ENCODE measurements at regions of chr14 and their contacts with region 1.

Region 1: GRCh38 chr14:59126710-59127432 is 61.6 kb upstream of the DAAM1 start:
- DNase-seq: peak in 1 of 2 donors; percentile 80
- H3K4me3 ChIP-seq: no peak overlapping the region
- H3K27ac ChIP-seq: no peak overlapping the region
- H3K4me1 ChIP-seq: no peaks in the 10 kb centered on the region
- H3K27me3 ChIP-seq: no peaks in the 10 kb centered on the region
- CTCF ChIP-seq: peak in 5 of 7 experiments; percentile 43 to 84 (median 67)
- EP300 ChIP-seq: no peak
- POLR2A ChIP-seq: no peak

Region 2: DNA sequence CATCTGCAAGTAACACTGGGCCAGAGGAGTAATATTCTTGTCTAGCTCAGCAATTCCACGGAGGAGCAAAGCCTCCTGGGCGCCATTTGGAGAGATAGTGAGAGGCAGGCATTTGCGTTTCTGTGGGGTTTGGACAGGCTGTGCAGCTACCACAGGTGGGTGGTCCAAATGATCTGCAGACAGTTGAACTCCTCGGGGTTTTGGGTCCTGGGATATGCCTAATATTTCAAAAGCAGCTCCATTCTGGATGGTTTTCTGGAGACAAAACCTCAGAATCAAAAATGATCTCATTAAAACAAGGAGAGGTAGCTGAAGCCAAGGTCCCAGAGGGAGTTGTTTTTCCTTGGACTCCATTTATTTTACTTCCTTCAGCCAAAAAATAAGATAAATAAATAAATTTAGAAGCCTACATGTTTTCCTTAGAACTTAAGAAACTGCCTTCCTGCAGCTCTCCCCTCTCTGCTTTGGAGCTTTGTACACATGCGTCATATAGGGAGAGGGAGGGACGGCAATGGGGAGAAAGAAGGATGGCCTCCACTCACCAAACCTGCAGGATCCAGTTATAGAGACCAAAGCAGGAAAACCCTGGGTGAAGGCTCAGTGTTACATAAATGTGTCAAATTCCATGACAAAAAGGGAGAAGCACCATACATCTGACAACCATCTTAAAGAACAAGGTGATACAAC is 165.7 kb before region 1 on chr14:
- intact Hi-C with region 1: no loop called
- DNase-seq: peak in 1 of 2 donors; percentile 36
- H3K4me3 ChIP-seq: no peak overlapping the region
- H3K27ac ChIP-seq: no peak overlapping the region
- H3K4me1 ChIP-seq: no peaks in the 10 kb centered on the region
- H3K27me3 ChIP-seq: no peaks in the 10 kb centered on the region
- CTCF ChIP-seq: no peak
- EP300 ChIP-seq: no peak
- POLR2A ChIP-seq: no peak

Region 3: GRCh38 chr14:59438195-59438647 is 311.4 kb after region 1 on chr14:
- intact Hi-C with region 1: loop called (anchors 5 kb)
- DNase-seq: no peak
- H3K4me3 ChIP-seq: no peak overlapping the region
- H3K27ac ChIP-seq: no peak overlapping the region
- H3K4me1 ChIP-seq: no peaks in the 10 kb centered on the region
- H3K27me3 ChIP-seq: no peaks in the 10 kb centered on the region
- CTCF ChIP-seq: no peak
- EP300 ChIP-seq: no peak
- POLR2A ChIP-seq: no peak

Region 4: DNA sequence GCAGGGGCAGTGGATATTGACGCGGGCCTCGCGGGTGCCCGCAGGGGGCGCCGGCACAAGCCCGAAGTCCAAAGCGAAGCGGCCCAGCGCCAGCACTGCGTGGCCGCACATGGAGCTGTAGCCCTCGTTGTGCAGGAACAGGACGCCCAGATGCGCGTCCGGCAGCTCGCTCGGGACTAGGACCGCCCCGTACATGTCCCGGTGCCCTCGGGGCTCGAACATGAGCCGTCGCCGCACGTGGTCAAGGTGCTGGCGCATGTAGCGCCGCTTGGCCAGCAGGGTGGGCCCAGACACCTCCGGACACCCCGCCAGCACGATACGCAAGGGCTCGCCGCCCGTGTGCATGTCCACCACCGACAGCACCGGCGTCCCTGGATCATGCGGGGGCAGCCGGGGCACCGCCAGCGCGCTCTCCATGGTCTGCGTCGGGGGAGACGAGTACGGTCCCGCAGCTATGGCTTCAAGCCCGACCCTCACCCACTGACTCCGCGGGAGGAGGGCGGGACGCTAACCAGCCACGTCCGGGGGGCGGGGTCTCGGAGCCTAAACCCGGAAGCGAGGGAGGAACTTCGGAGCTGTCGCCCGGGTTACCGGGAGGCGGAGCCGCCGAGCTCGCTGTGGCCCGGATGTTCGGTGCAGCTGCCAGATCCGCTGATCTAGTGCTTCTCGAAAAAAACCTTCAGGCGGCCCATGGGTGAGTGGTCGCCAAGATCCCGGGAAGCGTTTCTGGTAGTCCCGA is 357.2 kb after region 1 on chr14 and contains the starts of genes JKAMP and L3HYPDH:
- intact Hi-C with region 1: no loop called
- DNase-seq: peak; percentile 97 to 99
- H3K4me3 ChIP-seq: peak within 1 kb of the TSS; percentile 75 to 88 (median 85)
- H3K27ac ChIP-seq: peak within 1 kb of the TSS; percentile 91 to 96 (median 94)
- H3K4me1 ChIP-seq: peaks cover 42 to 75% (median 56%) of the 10 kb centered on the region in 4 donors
- H3K27me3 ChIP-seq: no peaks in the 10 kb centered on the region
- CTCF ChIP-seq: peak in 5 of 7 experiments; percentile 46 to 64 (median 58)
- EP300 ChIP-seq: no peak
- POLR2A ChIP-seq: peak in 2 of 4 donors; percentile 28 to 80
- total RNA-seq, gene JKAMP: 26.3 to 120 (median 95.1) TPM
- total RNA-seq, gene L3HYPDH: 4.9 to 40.2 (median 30.1) TPM

Measured in stomach (tissue), 19 donors.